Naive thymus-derived CD4-positive, alpha-beta T cell (primary cell): ENCODE measurements at regions of chr6 and their contacts with region 1.

Region 1: GRCh38 chr6:12119085-12119588 is 107.0 kb downstream of the HIVEP1 start:
- DNase-seq: peak in 8 of 9 donors; percentile 16 to 76 (median 48)
- ATAC-seq: peak; percentile 92
- H3K4me3 ChIP-seq: no peak overlapping the region
- H3K4me3 Mint-ChIP-seq: peak overlapping the region in 8 of 10 donors; percentile 1 to 56 (median 35)
- H3K27ac ChIP-seq: no peak overlapping the region
- H3K27ac Mint-ChIP-seq: peak overlapping the region; percentile 28 to 85 (median 68)
- H3K4me1 ChIP-seq: peaks cover 9 to 21% of the 10 kb centered on the region in 2 donors
- H3K4me1 Mint-ChIP-seq: peaks cover 28 to 81% (median 70%) of the 10 kb centered on the region in 7 donors
- H3K27me3 ChIP-seq: no peaks in the 10 kb centered on the region
- H3K27me3 Mint-ChIP-seq: no peaks in the 10 kb centered on the region

Region 2: DNA sequence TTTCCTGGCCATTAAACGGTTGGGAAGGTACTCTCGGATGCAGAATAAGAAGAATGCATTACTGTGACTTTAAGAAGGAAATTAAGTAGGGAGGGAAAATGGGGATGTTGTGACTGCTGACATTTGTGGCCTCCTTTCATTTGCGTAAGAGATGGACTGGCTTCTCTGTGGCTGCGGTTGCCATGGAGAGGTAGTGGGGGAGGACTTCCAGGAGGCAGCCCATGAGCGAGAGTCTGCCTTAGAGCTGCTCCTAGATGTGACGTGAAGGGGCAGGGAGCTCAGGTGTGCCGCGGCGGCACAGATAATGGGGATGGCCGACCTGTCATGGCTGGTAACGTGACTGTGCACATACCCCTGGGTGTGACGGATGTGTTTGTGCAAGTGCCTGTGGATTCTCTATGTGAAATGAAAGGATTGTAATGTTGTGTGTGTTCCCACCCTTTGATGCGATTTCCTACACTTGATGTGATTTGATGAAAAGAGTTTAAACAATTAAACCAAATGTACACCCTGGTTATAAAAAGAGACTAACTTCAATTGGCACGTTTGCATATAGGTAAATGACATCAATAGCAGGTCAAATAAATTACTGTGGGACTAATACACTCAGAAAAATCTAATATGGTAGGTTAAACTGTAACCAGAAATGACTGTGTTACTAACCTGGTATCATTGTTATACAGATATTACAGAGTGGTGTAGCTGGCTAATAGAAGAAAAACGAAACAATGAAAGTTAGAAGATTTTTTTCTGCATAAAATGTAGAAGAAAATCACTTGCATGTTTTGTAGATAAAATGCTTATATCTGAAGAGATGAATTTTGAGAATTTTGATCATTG is 58.1 kb before region 1 on chr6:
- CTCF ChIA-PET with region 1: no interaction called
- POLR2A ChIA-PET with region 1: no interaction called
- intact Hi-C with region 1: loop called in 1 of 2 experiments (anchors 2 kb)
- DNase-seq: peak; percentile 44 to 90 (median 76)
- ATAC-seq: peak; percentile 97
- H3K4me3 ChIP-seq: peak overlapping the region; percentile 24
- H3K4me3 Mint-ChIP-seq: peak overlapping the region; percentile 77 to 94 (median 84)
- H3K27ac ChIP-seq: peak overlapping the region; percentile 5
- H3K27ac Mint-ChIP-seq: peak overlapping the region in 8 of 9 donors; percentile 75 to 95 (median 88)
- H3K4me1 ChIP-seq: peaks cover 6 to 10% of the 10 kb centered on the region in 2 donors
- H3K4me1 Mint-ChIP-seq: peaks cover 42 to 78% (median 71%) of the 10 kb centered on the region in 7 donors
- H3K27me3 ChIP-seq: no peaks in the 10 kb centered on the region
- H3K27me3 Mint-ChIP-seq: no peaks in the 10 kb centered on the region

Region 3: DNA sequence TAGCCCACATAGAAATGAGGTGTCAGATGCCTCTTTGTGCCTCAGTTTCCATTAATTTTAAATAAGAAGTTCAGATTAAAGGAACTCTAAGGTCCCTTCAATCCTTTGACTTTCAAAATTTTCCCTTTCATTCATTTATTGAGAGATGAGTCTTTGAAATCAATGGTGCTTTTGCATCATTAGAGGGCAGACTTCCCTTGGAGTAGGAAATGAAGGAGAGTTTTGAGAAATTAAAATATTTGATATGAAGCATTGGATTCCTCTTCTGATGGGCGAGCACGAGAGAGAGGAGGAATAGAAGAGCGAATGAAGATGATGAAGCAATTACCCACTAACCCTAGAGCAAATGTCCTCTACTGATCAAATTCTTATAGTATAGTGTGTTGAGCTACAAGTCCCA is 276.8 kb after region 1 on chr6:
- CTCF ChIA-PET with region 1: no interaction called
- POLR2A ChIA-PET with region 1: no interaction called
- intact Hi-C with region 1: no loop called
- DNase-seq: no peak
- ATAC-seq: no peak
- H3K4me3 ChIP-seq: no peak overlapping the region
- H3K4me3 Mint-ChIP-seq: no peak overlapping the region
- H3K27ac ChIP-seq: no peak overlapping the region
- H3K27ac Mint-ChIP-seq: no peak overlapping the region
- H3K4me1 ChIP-seq: no peaks in the 10 kb centered on the region
- H3K4me1 Mint-ChIP-seq: no peaks in the 10 kb centered on the region
- H3K27me3 ChIP-seq: no peaks in the 10 kb centered on the region
- H3K27me3 Mint-ChIP-seq: peaks cover 11 to 21% (median 16%) of the 10 kb centered on the region in 5 donors

Region 4: GRCh38 chr6:13165518-13166172 is 1046.5 kb after region 1 on chr6:
- CTCF ChIA-PET with region 1: no interaction called
- POLR2A ChIA-PET with region 1: no interaction called
- intact Hi-C with region 1: no loop called
- DNase-seq: no peak
- ATAC-seq: no peak
- H3K4me3 ChIP-seq: no peak overlapping the region
- H3K4me3 Mint-ChIP-seq: no peak overlapping the region
- H3K27ac ChIP-seq: no peak overlapping the region
- H3K27ac Mint-ChIP-seq: no peak overlapping the region
- H3K4me1 ChIP-seq: no peaks in the 10 kb centered on the region
- H3K4me1 Mint-ChIP-seq: peaks cover 0 to 6% (median 4%) of the 10 kb centered on the region in 7 donors
- H3K27me3 ChIP-seq: no peaks in the 10 kb centered on the region
- H3K27me3 Mint-ChIP-seq: peaks cover 5 to 19% (median 17%) of the 10 kb centered on the region in 5 donors